MCF 10A (cell line): ENCODE measurements at regions of chr9 and their contacts with region 1.

Region 1: DNA sequence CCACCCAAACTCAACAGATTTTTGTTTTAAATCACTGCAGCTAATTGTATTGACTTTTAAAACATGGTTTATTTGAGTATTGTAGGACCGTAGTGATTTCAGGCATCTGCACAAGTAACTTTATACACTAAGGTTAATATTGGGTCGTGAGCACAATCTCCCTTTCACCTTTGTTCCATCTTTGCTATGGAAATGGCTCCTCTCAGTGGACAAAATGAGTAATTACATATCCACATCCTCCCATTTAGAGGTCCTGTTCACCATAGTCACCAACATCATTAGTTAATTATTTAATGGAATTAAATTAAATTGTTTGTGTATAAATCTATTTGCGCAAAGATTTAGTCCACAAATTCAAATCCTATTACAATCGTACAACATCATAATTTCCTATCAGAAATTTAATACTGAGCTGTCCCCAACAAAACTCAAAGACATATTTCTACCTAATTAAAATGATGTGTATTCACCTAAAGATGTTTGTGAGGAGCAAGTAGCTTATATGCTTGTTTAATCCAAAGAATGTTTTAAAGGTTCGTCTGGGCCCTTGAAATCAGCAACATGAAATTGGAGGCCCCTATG is 173.0 kb upstream of the DAPK1 start:
- DNase-seq: peak; percentile 75
- H3K4me3 Mint-ChIP-seq: no peak overlapping the region
- H3K27ac Mint-ChIP-seq: no peak overlapping the region
- H3K4me1 Mint-ChIP-seq: peaks cover 17% of the 10 kb centered on the region
- H3K27me3 Mint-ChIP-seq: no peaks in the 10 kb centered on the region
- CTCF ChIP-seq: peak; percentile 52

Region 2: DNA sequence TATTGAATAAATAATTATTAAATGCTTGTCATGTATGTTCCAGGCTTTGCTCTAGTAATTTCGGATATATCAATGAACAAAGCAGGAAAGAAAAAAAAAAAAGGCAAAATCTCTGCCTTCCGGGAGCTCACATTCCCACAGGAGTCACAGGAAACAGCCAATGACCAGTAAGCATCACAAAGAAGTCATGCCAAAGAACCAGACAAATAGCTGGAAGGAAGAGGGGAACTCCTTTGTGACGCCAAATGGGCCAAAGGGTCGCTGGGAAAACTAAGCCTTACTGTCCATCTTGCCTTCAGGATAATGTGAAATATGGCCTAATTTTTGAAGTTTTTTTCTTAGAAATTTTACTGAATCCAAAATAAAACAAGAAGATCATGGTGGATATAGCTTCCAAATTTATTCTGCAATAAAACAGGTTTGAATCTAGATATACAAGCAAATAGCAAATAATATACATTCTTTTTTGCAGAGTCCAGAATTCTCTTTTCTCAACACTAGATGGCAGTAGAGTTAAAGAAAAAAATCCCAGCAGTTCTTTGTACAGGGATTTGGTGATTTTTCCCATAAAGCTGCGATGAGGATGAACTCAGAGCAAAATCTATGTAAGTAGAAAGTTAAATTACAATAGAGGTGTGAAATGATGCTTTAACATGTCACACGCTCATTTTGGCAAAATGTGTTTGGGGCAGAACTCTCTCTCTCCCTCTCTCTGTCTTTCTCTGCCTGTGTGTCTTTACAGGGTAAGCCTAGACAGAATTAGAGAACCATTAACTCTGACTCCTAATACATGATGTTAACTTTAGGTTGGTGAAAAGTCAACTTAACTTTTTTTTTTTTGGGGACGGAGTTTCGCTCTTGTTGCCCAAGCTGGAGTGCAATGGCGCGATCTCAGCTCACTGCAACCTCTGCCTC is 910.5 kb before region 1 on chr9:
- CTCF ChIA-PET with region 1: interaction called, 8 read pairs
- POLR2A ChIA-PET with region 1: interaction called, 3 read pairs
- intact Hi-C with region 1: loop called (anchors 1 kb)
- DNase-seq: peak; percentile 45
- H3K4me3 Mint-ChIP-seq: no peak overlapping the region
- H3K27ac Mint-ChIP-seq: no peak overlapping the region
- H3K4me1 Mint-ChIP-seq: no peaks in the 10 kb centered on the region
- H3K27me3 Mint-ChIP-seq: no peaks in the 10 kb centered on the region
- CTCF ChIP-seq: peak; percentile 44

Region 3: GRCh38 chr9:86486891-86487837 is 837.5 kb before region 1 on chr9:
- CTCF ChIA-PET with region 1: interaction called, 134 read pairs
- POLR2A ChIA-PET with region 1: interaction called, 8 read pairs
- intact Hi-C with region 1: loop called (anchors 1 kb)
- DNase-seq: peak; percentile 64
- H3K4me3 Mint-ChIP-seq: no peak overlapping the region
- H3K27ac Mint-ChIP-seq: no peak overlapping the region
- H3K4me1 Mint-ChIP-seq: peaks cover 6% of the 10 kb centered on the region
- H3K27me3 Mint-ChIP-seq: no peaks in the 10 kb centered on the region
- CTCF ChIP-seq: peak; percentile 76

Region 4: DNA sequence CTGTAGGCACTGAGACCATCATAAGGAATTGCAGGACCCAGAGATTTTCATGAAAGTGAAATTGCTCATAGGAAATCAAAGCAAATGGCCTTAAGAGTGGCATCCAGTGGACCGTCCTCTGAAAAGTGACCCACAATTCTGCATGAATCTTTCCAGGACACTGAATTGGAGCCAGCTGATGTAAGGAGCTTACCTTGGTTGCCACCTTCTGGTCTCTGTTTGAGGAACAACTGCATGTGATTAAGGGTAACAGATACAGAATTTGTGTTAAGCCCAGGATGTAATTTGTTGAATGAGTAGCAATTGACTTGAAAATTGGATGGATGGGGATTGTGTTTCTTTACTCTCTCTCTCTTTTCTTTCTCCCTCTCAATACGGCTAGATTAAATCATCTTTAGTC is 327.5 kb before region 1 on chr9:
- CTCF ChIA-PET with region 1: interaction called, 4 read pairs
- POLR2A ChIA-PET with region 1: no interaction called
- intact Hi-C with region 1: loop called (anchors 5 kb)
- DNase-seq: peak; percentile 52
- H3K4me3 Mint-ChIP-seq: no peak overlapping the region
- H3K27ac Mint-ChIP-seq: no peak overlapping the region
- H3K4me1 Mint-ChIP-seq: peaks cover 10% of the 10 kb centered on the region
- H3K27me3 Mint-ChIP-seq: no peaks in the 10 kb centered on the region
- CTCF ChIP-seq: peak; percentile 41